CD14-positive monocyte (primary cell): ENCODE measurements at regions of chr3 and their contacts with region 1.

Region 1: GRCh38 chr3:54951405-54951804 is 23.5 kb upstream of the LRTM1 start:
- DNase-seq: peak; percentile 42 to 61 (median 57)
- H3K4me3 ChIP-seq: no peak overlapping the region
- H3K4me3 Mint-ChIP-seq: no peak overlapping the region
- H3K27ac ChIP-seq: no peak overlapping the region
- H3K27ac Mint-ChIP-seq: peak overlapping the region in 1 of 7 donors; percentile 48
- H3K4me1 ChIP-seq: no peaks in the 10 kb centered on the region
- H3K4me1 Mint-ChIP-seq: peaks cover 6% of the 10 kb centered on the region
- H3K27me3 ChIP-seq: no peaks in the 10 kb centered on the region
- H3K27me3 Mint-ChIP-seq: peaks cover 0 to 5% (median 5%) of the 10 kb centered on the region in 3 donors
- CTCF ChIP-seq: peak; percentile 73

Region 2: GRCh38 chr3:54846119-54846518 is 105.3 kb before region 1 on chr3:
- intact Hi-C with region 1: no loop called
- DNase-seq: no peak
- H3K4me3 ChIP-seq: no peak overlapping the region
- H3K4me3 Mint-ChIP-seq: no peak overlapping the region
- H3K27ac ChIP-seq: no peak overlapping the region
- H3K27ac Mint-ChIP-seq: no peak overlapping the region
- H3K4me1 ChIP-seq: no peaks in the 10 kb centered on the region
- H3K4me1 Mint-ChIP-seq: no peaks in the 10 kb centered on the region
- H3K27me3 ChIP-seq: no peaks in the 10 kb centered on the region
- H3K27me3 Mint-ChIP-seq: peaks cover 2 to 4% (median 2%) of the 10 kb centered on the region in 3 donors
- CTCF ChIP-seq: no peak

Region 3: DNA sequence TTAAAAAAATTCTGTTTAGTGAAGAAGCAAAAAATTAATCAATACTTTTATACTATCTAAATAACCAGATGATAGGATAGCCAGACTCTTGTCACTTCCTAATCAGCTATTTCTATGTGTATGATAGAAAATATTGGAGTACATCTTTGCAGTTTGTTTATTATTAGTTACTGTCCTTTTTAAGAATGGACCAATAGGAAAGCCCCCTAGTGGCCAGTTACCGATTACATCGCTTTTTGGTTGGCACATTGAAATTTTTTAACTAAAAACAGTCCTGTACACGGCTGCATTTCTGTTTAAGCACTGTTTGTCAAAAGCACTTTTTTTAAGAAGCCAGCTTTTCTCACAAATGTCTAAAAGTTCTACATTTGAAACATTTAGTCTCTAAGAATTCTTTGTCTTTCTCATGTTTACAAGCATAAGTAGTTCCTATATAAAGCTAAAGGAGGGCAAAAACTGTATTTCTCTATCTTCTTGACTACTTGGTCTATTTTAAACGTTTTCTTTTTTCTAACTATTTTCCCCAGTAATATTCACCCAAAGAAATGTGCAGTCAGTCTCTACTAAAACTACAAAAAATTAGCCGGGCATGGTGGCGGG is 229.6 kb after region 1 on chr3:
- intact Hi-C with region 1: loop called (anchors 5 kb)
- DNase-seq: peak in 2 of 3 donors; percentile 13 to 30
- H3K4me3 ChIP-seq: no peak overlapping the region
- H3K4me3 Mint-ChIP-seq: no peak overlapping the region
- H3K27ac ChIP-seq: no peak overlapping the region
- H3K27ac Mint-ChIP-seq: no peak overlapping the region
- H3K4me1 ChIP-seq: no peaks in the 10 kb centered on the region
- H3K4me1 Mint-ChIP-seq: no peaks in the 10 kb centered on the region
- H3K27me3 ChIP-seq: no peaks in the 10 kb centered on the region
- H3K27me3 Mint-ChIP-seq: peaks cover 2 to 5% (median 2%) of the 10 kb centered on the region in 3 donors
- CTCF ChIP-seq: peak; percentile 87